ENCODE measurements at regions of chr10 and their contacts with region 1.

Region 1: DNA sequence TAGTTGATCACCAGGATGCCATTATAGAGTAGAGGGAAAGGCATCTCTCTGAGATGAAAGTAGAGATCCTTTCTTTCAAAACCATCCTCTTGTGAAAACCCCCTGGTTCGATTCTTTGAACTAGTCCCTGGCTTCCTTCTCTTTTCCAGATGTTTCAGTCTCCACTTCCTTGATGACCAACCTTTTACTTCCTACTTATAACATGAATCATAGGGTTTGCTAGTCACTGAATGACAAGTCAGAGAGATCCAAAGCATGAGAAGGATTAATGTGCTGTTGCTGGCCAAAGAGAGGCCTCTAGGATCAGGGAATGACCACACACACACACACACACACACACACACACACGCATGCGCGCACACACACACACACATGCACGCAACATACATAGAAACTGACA is 161.1 kb upstream of the FRMD4A start:
- DNase-seq: no peak

Region 2: GRCh38 chr10:14306190-14306589 is 185.6 kb before region 1 on chr10:
- intact Hi-C with region 1: no loop called
- DNase-seq: no peak

Region 3: DNA sequence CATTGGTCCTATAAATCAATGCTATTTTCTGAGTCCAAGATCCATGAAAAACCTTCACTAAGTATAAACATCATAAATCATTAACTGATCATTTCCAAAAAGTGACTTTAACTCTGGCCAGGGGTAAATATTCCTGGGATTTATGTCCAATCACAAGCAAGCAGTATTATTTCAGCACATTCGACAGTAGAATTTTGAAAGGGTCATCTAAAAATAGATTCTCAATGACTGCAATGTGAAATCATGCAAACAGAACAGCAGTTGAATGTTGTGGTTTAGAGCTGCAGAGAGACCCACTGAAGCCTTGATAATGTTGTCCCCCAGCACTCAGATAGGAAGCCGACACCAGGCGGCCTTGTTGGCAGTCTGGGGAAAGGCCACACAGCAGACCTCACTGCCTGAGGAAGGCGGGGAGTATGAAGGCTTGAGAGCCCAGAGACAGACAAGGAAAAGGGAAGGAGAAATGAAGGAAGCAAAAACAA is 244.8 kb after region 1 on chr10:
- intact Hi-C with region 1: no loop called
- DNase-seq: peak in 9 of 42 donors; percentile 12 to 61 (median 22)

Region 4: DNA sequence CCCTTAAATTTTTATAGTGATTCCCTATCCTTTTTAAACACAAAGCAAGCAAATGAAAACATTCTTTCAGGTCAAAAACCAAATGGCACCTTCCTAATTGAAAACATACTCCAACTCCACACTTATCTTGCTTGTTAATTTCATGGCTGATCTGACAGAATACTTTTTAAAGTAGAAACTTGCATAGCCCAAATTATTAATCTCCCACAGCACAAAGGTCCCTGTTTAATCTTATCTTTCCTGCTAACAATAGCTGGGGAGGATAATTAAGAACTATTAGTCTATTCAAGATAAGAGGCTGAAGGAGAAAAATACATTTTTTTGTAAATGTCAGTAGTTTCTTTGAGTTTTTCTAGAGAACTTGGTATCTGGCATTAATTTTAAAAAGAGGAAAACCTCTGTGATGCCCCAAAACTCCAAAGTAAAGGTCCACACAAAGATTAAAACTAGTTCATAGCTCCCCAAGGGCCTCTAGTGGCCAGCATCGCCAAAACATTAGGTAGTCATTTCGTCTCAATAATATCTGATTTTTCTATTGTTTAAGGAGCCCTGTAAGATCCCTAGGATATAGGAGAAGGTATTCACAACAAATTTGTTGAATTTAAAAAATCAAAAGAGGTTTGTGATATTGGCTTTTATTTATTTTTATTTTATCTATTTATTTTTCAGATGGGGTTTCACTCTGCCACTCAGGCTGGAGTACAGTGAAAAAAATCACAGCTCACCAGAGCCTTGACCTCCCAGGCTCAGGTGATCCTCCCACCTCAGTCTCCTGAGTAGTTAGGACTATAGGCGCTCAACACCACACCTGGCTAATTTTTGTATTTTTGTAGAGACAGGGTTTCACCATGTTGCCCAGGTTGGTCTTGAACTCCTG is 331.3 kb after region 1 on chr10:
- intact Hi-C with region 1: loop called (anchors 10 kb)
- DNase-seq: peak in 33 of 42 donors; percentile 15 to 74 (median 49)